ENCODE measurements at regions of chr4 and their contacts with region 1.

Region 1: GRCh38 chr4:89226665-89227574 is 80.7 kb downstream of the GPRIN3 start:
- DNase-seq: peak; percentile 37 to 79 (median 68)
- ATAC-seq: peak; percentile 93
- H3K4me3 ChIP-seq: peak overlapping the region; percentile 21
- H3K4me3 Mint-ChIP-seq: peak overlapping the region in 9 of 10 donors; percentile 54 to 78 (median 63)
- H3K27ac ChIP-seq: no peak overlapping the region
- H3K27ac Mint-ChIP-seq: peak overlapping the region in 2 of 9 donors; percentile 19 to 34
- H3K4me1 ChIP-seq: no peaks in the 10 kb centered on the region
- H3K4me1 Mint-ChIP-seq: peaks cover 0 to 10% (median 5%) of the 10 kb centered on the region in 7 donors
- H3K27me3 ChIP-seq: no peaks in the 10 kb centered on the region
- H3K27me3 Mint-ChIP-seq: peaks cover 0 to 7% (median 0%) of the 10 kb centered on the region in 5 donors

Region 2: DNA sequence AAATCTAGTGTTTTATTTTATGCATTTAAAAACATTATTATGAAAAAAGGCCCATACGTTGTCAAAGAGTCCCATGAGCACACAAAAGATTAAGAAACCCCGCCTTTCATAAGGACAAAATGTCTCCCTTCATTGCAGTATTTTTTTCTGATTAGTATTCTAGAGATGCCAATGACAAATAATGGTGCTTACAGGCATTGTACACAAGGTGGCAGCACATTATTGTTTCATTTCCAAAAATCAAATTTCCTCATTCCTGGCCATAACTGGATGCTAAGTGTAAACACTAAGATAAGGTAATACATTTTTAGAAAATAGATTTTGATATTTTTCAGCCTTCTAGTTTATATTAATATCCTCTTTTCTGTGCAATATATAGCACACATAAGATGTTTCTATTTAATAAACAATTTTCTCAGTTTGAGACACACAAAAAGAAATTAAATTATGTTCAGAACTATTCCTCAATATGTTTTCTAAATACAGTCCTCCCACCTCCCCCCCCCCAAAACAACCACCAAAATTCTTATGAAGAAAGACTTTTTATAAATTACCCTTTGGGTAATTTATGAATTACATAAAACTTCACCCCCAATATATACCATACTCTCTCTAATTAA is 67.9 kb before region 1 on chr4:
- CTCF ChIA-PET with region 1: interaction called, 3 read pairs
- POLR2A ChIA-PET with region 1: no interaction called
- intact Hi-C with region 1: loop called (anchors 1 to 2 kb)
- DNase-seq: peak in 5 of 9 donors; percentile 5 to 30 (median 21)
- ATAC-seq: peak; percentile 82
- H3K4me3 ChIP-seq: no peak overlapping the region
- H3K4me3 Mint-ChIP-seq: no peak overlapping the region
- H3K27ac ChIP-seq: no peak overlapping the region
- H3K27ac Mint-ChIP-seq: no peak overlapping the region
- H3K4me1 ChIP-seq: no peaks in the 10 kb centered on the region
- H3K4me1 Mint-ChIP-seq: peaks cover 0 to 5% (median 0%) of the 10 kb centered on the region in 7 donors
- H3K27me3 ChIP-seq: no peaks in the 10 kb centered on the region
- H3K27me3 Mint-ChIP-seq: peaks cover 3 to 20% (median 5%) of the 10 kb centered on the region in 5 donors

Region 3: GRCh38 chr4:89248879-89249281 is 22.0 kb after region 1 on chr4:
- CTCF ChIA-PET with region 1: interaction called, 10 read pairs
- POLR2A ChIA-PET with region 1: no interaction called
- intact Hi-C with region 1: loop called (anchors 1 kb)
- DNase-seq: no peak
- ATAC-seq: no peak
- H3K4me3 ChIP-seq: no peak overlapping the region
- H3K4me3 Mint-ChIP-seq: no peak overlapping the region
- H3K27ac ChIP-seq: no peak overlapping the region
- H3K27ac Mint-ChIP-seq: peak overlapping the region in 1 of 9 donors; percentile 29
- H3K4me1 ChIP-seq: peaks cover 5 to 28% of the 10 kb centered on the region in 2 donors
- H3K4me1 Mint-ChIP-seq: peaks cover 17 to 72% (median 51%) of the 10 kb centered on the region in 7 donors
- H3K27me3 ChIP-seq: no peaks in the 10 kb centered on the region
- H3K27me3 Mint-ChIP-seq: no peaks in the 10 kb centered on the region

Region 4: DNA sequence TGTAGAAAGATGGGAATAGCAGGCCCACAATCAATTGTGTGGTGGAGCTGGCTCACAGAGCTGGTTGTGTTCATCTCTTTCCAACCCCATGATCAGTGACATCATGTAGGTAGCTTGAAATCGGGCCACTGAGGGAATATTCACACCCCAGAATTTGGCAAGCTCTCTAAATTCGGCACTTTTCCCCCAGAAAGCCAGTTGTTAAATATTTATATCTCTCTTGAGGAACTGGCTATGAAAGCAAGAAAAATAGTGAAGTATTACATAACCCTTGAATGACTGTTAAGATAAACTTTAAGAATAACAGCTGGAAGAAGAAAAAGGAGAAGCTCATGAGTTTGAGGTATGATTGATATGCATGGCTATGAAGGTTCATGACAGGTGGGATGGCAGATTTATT is 41.8 kb after region 1 on chr4:
- CTCF ChIA-PET with region 1: no interaction called
- POLR2A ChIA-PET with region 1: no interaction called
- intact Hi-C with region 1: no loop called
- DNase-seq: no peak
- ATAC-seq: no peak
- H3K4me3 ChIP-seq: no peak overlapping the region
- H3K4me3 Mint-ChIP-seq: no peak overlapping the region
- H3K27ac ChIP-seq: no peak overlapping the region
- H3K27ac Mint-ChIP-seq: peak overlapping the region in 3 of 9 donors; percentile 15 to 59 (median 25)
- H3K4me1 ChIP-seq: peaks cover 7 to 41% of the 10 kb centered on the region in 2 donors
- H3K4me1 Mint-ChIP-seq: peaks cover 36 to 80% (median 74%) of the 10 kb centered on the region in 7 donors
- H3K27me3 ChIP-seq: no peaks in the 10 kb centered on the region
- H3K27me3 Mint-ChIP-seq: no peaks in the 10 kb centered on the region

Region 5: DNA sequence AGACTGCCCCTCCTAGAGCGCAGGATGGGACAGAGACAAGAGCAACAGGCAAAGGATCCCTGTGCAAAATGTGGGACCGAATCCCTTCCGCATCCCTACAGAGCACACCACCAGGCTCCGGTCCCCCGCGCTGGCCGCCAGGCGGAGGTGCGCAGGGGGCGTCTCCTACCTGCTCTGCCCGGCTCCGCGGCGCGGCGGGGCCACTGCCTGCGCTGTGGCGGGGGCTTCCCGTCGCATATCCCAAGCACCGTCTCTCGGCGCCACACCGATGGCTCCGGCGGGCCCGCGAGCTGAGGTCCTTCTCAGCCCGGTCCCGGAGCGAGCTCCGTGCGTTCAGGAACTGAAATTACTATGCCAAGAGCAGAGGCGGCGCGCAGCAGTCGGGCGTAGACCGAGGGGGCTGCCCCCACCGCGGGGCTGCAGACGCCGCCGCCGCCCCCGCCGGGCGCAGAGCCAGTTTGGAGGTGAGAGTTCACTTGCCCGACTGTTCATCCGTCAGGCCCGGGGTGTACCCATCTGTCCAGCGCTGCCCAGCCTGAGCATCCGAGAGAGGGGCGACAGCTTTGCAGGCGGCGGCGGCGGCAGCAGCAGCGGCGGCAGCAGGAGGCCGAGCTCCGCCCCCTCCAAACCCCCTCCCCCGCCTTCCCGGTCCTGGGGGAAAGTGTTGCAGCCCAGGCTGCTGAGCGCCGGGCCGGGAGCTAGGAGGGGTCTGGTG is 80.7 kb after region 1 on chr4 and contains the start of gene GPRIN3:
- CTCF ChIA-PET with region 1: interaction called, 3 read pairs
- POLR2A ChIA-PET with region 1: no interaction called
- intact Hi-C with region 1: loop called in 1 of 2 experiments (anchors 5 kb)
- DNase-seq: peak; percentile 54 to 80 (median 66)
- ATAC-seq: peak; percentile 79
- H3K4me3 ChIP-seq: peak within 1 kb of the TSS; percentile 93
- H3K4me3 Mint-ChIP-seq: peak within 1 kb of the TSS; percentile 80 to 99 (median 94)
- H3K27ac ChIP-seq: peak within 1 kb of the TSS; percentile 81
- H3K27ac Mint-ChIP-seq: peak within 1 kb of the TSS; percentile 83 to 98 (median 90)
- H3K4me1 ChIP-seq: peaks cover 18 to 20% of the 10 kb centered on the region in 2 donors
- H3K4me1 Mint-ChIP-seq: peaks cover 39 to 70% (median 64%) of the 10 kb centered on the region in 7 donors
- H3K27me3 ChIP-seq: no peaks in the 10 kb centered on the region
- H3K27me3 Mint-ChIP-seq: no peaks in the 10 kb centered on the region
- total RNA-seq, gene GPRIN3: 10.2 to 55.5 (median 24.8) TPM

Region 6: DNA sequence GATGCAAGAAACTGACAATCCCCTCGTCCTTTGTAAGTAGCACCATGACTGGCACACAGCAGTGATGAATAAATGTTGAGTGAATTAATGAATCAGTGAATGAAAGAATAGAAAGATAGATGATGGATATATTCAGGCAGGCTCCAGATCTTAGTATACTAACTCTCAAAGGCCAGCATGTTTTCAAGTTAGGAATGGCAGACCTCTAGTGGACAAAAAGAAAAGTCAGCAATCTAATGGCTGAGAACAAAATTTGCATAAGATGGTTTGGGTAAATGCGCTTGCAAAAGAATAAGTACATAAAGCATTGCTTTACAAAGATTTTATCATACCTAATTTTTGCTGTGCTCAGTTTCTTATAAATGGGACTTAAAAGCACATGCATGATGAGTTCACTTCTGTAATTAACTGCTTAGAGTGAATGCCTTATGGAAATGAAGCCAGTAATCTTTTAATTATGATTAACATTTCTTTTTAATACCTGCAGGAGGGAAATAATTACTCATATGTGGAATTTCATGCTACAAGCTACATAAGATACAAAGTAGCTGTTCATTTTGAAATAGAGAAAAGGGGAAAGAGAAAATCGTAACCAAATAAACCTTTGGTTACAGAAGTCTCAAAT is 207.6 kb after region 1 on chr4:
- CTCF ChIA-PET with region 1: interaction called, 70 read pairs
- POLR2A ChIA-PET with region 1: interaction called, 3 read pairs
- intact Hi-C with region 1: loop called (anchors 1 kb)
- DNase-seq: peak in 6 of 9 donors; percentile 28 to 61 (median 45)
- ATAC-seq: peak; percentile 72
- H3K4me3 ChIP-seq: no peak overlapping the region
- H3K4me3 Mint-ChIP-seq: no peak overlapping the region
- H3K27ac ChIP-seq: no peak overlapping the region
- H3K27ac Mint-ChIP-seq: peak overlapping the region in 1 of 9 donors; percentile 14
- H3K4me1 ChIP-seq: no peaks in the 10 kb centered on the region
- H3K4me1 Mint-ChIP-seq: peaks cover 8 to 23% (median 13%) of the 10 kb centered on the region in 7 donors
- H3K27me3 ChIP-seq: no peaks in the 10 kb centered on the region
- H3K27me3 Mint-ChIP-seq: no peaks in the 10 kb centered on the region

Region 7: DNA sequence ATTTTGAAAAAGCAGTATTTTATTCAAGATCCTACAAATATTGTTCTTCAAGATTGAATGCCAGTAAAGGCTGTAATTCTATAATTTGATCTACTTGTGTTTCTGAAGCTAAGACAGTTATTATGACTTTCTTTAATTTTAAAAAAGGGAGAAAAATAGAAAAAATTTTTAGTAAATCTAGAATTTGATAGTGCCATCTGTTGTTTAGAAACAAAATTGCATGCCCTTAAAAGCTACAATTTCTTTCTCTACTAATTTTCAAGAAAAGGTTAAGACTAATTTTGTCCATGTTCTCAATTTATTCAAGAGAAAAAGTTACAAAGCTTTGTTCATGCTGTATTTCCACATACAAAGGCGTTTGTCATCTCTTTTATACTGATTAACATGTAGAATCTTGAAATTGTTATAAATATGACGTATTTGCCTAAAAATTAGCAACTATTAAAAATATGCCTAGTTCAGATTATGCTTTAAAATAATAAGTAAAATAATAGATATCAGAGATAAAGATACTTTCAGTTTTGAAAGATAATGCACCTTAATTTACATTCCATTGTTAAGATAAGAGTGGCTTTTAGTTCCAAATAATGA is 642.2 kb after region 1 on chr4:
- CTCF ChIA-PET with region 1: interaction called, 5 read pairs
- POLR2A ChIA-PET with region 1: no interaction called
- intact Hi-C with region 1: loop called in 1 of 2 experiments (anchors 1 kb)
- DNase-seq: no peak
- ATAC-seq: no peak
- H3K4me3 ChIP-seq: no peak overlapping the region
- H3K4me3 Mint-ChIP-seq: no peak overlapping the region
- H3K27ac ChIP-seq: no peak overlapping the region
- H3K27ac Mint-ChIP-seq: no peak overlapping the region
- H3K4me1 ChIP-seq: no peaks in the 10 kb centered on the region
- H3K4me1 Mint-ChIP-seq: no peaks in the 10 kb centered on the region
- H3K27me3 ChIP-seq: no peaks in the 10 kb centered on the region
- H3K27me3 Mint-ChIP-seq: peaks cover 4 to 16% (median 6%) of the 10 kb centered on the region in 5 donors